ENCODE measurements at regions of chr1 and their contacts with region 1.

Region 1: GRCh38 chr1:165392634-165393571 is 36.4 kb upstream of the LMX1A start:
- DNase-seq: peak; percentile 89 to 97
- H3K4me3 ChIP-seq: no peak overlapping the region
- CTCF ChIP-seq: peak in 1 of 3 donors; percentile 91
- POLR2A ChIP-seq: no peak

Region 2: DNA sequence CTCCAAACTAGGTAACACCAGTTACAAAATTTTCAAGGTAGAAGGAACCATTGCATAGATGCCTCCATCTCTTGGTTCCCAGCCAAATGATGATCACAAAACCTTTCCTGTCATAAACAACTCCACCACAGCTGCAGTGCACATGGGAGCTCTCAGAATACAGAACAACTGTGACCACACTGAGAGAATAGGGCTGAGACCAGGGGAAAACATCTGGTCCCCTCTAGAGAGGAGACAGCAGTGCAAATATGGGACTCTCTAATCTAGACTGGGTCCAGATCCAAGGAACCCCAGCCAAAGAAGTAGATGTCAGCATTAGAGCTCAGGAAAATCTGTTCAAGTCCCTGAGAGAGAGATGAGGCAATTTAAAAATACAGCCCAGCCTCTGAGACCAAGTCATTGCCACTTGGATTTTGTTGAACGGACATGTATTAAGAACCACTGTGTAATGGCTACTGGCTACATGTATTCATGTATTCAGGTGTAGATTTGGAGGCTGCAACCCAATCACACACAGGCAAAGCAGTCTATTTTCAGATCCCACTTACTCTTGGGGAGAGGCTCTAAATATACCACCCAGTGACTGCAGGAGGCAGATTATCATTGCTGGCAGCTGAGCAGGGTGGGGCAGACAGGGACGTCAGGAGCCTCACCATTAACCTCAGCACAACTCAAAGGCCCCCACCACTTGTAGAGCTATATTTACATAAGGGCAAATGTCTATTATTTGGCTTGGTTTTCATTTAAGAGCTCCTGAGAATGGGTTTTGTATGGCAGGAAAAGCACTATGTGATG is 59.6 kb after region 1 on chr1:
- intact Hi-C with region 1: loop called (anchors 10 kb)
- DNase-seq: no peak
- H3K4me3 ChIP-seq: no peak overlapping the region
- CTCF ChIP-seq: no peak
- POLR2A ChIP-seq: no peak